ENCODE measurements at regions of chr19 and their contacts with region 1.

Region 1: DNA sequence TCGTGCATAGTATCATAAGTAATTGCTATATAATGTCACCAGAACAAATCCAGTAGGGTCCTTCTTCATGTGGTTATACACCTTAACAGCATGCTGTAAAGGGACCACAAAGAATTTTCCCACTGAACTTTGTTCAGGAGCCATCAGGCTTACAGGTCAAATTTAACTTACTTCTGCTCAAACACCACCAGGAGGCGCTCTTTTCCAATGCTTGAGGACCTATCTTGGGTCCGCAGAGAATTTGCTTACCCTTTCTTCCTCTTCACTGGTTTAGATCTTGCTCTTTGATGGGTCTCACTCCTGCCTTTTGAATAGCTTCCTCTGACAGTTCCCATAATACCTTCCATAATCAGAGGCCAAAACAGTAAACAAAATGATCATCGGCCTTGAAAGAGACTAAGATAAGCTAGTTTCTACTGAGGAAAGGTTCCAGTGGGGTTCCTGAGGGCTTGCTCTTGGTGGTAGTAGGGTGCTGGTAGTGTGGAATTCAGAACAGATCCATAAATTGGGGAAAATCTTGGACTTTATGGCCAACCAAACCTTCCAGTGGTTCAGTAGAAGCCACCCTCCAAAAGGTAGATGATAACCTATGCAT is 37.4 kb downstream of the SCGB2B2 start:
- DNase-seq: peak in 1 of 2 donors; percentile 28
- H3K4me3 ChIP-seq: no peak overlapping the region
- H3K27ac ChIP-seq: no peak overlapping the region
- H3K4me1 ChIP-seq: no peaks in the 10 kb centered on the region
- H3K27me3 ChIP-seq: no peaks in the 10 kb centered on the region
- CTCF ChIP-seq: peak; percentile 46 to 71 (median 58)
- POLR2A ChIP-seq: no peak

Region 2: DNA sequence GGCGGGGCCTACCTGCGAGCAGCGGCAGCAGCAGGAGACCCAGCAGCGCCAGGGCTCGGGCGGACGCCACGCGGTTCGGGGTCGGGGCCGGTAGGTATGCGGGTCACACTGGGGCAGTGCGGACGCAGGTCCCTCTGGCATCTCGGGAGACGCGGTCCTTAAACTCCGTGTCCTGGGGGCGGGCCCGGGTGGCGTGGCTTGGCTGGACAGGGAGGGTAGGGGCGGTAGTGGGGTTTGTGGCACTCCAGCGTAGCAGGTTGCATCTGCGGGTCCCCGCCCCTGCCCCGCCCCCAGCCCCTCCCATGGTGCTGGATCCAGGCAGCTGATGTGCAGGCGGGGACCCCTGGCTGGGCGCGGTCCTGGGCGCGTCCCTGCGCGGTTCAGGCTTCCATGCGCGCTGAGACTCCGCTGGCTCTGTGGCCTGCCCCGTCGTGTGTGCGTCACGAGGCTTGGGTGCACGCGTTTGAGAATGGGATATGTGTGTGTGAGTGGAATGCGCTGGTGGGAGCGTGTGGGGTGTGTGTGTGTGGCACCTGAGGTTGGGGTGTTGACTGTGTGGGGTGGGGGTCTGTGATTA is 62.0 kb before region 1 on chr19:
- intact Hi-C with region 1: no loop called
- DNase-seq: no peak
- H3K4me3 ChIP-seq: no peak overlapping the region
- H3K27ac ChIP-seq: no peak overlapping the region
- H3K4me1 ChIP-seq: no peaks in the 10 kb centered on the region
- H3K27me3 ChIP-seq: no peaks in the 10 kb centered on the region
- CTCF ChIP-seq: no peak
- POLR2A ChIP-seq: no peak

Region 3: DNA sequence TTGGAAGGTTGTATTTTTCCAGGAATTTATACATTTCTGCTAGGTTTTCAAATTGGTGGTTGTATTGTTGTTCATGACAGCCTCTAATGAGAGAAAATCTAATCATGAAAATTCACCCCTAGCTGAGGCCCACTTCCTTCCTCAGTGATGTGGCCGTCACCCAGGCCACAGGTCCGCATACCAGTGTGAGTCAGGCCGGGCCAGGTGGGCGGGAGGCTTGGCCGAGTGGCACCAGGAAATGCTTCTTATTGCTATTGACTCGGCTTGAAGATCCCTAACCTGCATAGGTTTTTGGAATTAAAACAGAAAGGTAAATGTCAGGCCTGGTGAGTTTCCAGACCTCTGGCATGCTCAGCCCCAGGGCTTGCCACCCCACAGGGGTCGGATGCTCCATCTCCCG is 51.3 kb before region 1 on chr19:
- intact Hi-C with region 1: no loop called
- DNase-seq: no peak
- H3K4me3 ChIP-seq: no peak overlapping the region
- H3K27ac ChIP-seq: no peak overlapping the region
- H3K4me1 ChIP-seq: no peaks in the 10 kb centered on the region
- H3K27me3 ChIP-seq: no peaks in the 10 kb centered on the region
- CTCF ChIP-seq: no peak
- POLR2A ChIP-seq: no peak

Region 4: GRCh38 chr19:34712395-34713261 is 73.0 kb after region 1 on chr19:
- intact Hi-C with region 1: loop called (anchors 5 kb)
- DNase-seq: peak; percentile 24 to 58
- H3K4me3 ChIP-seq: no peak overlapping the region
- H3K27ac ChIP-seq: no peak overlapping the region
- H3K4me1 ChIP-seq: no peaks in the 10 kb centered on the region
- H3K27me3 ChIP-seq: no peaks in the 10 kb centered on the region
- CTCF ChIP-seq: peak; percentile 61 to 90 (median 78)
- POLR2A ChIP-seq: no peak